ENCODE measurements at regions of chr10 and their contacts with region 1.

Region 1: GRCh38 chr10:67520924-67521520 is 175.0 kb downstream of the CTNNA3 start:
- DNase-seq: no peak
- ATAC-seq: peak; percentile 78
- H3K4me3 ChIP-seq: no peak overlapping the region
- H3K27ac ChIP-seq: no peak overlapping the region
- H3K4me1 ChIP-seq: no peaks in the 10 kb centered on the region
- H3K27me3 ChIP-seq: no peaks in the 10 kb centered on the region

Region 2: DNA sequence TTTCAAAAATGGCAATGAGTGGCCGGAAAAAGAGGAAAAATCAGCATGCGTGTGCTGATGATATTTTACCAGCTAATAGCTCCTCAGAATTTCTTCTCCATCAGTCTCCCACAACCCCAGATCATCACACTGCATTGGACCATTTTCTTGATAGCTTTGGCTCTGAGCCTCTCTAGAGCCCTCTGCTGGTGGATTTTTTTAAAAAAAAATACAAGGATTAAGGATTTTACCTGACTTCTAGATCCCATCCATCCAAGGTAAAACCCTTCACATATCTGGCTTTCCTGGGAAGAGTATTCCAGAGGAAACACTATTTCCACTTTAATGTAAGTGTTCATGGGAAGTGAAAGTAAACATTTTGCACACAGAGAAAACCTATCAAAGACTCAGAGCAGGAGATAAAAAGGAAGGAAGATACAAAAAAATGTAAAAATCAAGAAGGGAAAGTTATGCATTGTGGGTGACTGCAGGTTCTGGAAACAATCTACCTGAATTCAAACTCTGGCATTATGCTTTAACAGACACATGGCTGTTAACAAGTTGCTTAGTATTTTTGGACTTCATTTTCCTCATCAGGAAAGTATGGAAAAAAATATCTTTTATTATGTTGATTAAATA is 214.3 kb before region 1 on chr10:
- intact Hi-C with region 1: loop called in 1 of 2 experiments (anchors 5 kb)
- DNase-seq: no peak
- ATAC-seq: no peak
- H3K4me3 ChIP-seq: no peak overlapping the region
- H3K27ac ChIP-seq: no peak overlapping the region
- H3K4me1 ChIP-seq: no peaks in the 10 kb centered on the region
- H3K27me3 ChIP-seq: no peaks in the 10 kb centered on the region

Region 3: DNA sequence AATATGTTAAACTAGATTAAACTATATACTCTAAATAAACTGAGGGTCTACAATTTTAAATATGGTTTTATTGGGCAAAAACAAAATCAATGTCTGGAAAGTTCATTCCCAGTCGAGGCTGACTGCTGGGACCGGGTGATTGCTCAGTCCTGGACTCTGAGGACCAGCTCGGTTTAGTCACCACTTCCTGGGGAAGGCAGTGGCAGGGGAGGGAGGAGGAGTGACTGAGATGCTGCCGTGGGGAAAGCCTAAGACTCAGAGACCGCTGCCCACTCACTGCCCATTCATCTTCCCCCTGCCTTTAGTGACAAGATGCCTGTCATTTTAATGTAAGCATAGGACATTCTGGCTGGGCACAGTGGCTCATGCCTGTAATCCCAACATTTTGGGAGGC is 681.9 kb after region 1 on chr10:
- intact Hi-C with region 1: no loop called
- DNase-seq: no peak
- ATAC-seq: no peak
- H3K4me3 ChIP-seq: no peak overlapping the region
- H3K27ac ChIP-seq: no peak overlapping the region
- H3K4me1 ChIP-seq: no peaks in the 10 kb centered on the region
- H3K27me3 ChIP-seq: no peaks in the 10 kb centered on the region

Measured in aorta (tissue), 5 donors.